ENCODE measurements at regions of chr12 and their contacts with region 1.

Region 1: GRCh38 chr12:28253161-28253641 is 62.9 kb downstream of the CCDC91 start:
- DNase-seq: peak; percentile 60
- H3K4me3 Mint-ChIP-seq: peak overlapping the region; percentile 30
- H3K27ac Mint-ChIP-seq: peak overlapping the region; percentile 79
- H3K4me1 Mint-ChIP-seq: peaks cover 63% of the 10 kb centered on the region
- H3K27me3 Mint-ChIP-seq: no peaks in the 10 kb centered on the region

Region 2: GRCh38 chr12:27802511-27802910 is 450.7 kb before region 1 on chr12:
- CTCF ChIA-PET with region 1: no interaction called
- intact Hi-C with region 1: loop called (anchors 1 kb)
- DNase-seq: peak; percentile 49
- H3K4me3 Mint-ChIP-seq: no peak overlapping the region
- H3K27ac Mint-ChIP-seq: peak overlapping the region; percentile 85
- H3K4me1 Mint-ChIP-seq: peaks cover 59% of the 10 kb centered on the region
- H3K27me3 Mint-ChIP-seq: peaks cover 4% of the 10 kb centered on the region

Region 3: DNA sequence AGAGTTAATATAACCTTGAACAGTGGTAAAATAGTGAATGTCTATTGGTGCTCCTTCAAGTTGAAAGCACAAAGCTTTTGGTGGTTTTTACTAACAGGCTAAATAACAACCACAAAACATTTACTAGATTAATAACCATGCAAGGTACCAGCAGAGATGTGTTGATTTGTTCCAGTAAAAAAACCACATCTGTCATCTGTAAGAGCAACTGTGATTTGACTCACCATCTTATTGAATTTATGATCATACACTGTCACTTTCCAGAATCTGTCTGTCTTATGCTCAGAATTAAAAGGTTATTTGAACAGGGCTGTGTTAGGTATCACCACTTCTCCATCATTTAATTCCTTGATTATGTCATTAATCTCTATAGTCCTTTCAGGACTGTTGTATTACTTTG is 173.7 kb before region 1 on chr12:
- CTCF ChIA-PET with region 1: no interaction called
- intact Hi-C with region 1: loop called (anchors 2 kb)
- DNase-seq: no peak
- H3K4me3 Mint-ChIP-seq: no peak overlapping the region
- H3K27ac Mint-ChIP-seq: no peak overlapping the region
- H3K4me1 Mint-ChIP-seq: peaks cover 8% of the 10 kb centered on the region
- H3K27me3 Mint-ChIP-seq: peaks cover 8% of the 10 kb centered on the region

Region 4: DNA sequence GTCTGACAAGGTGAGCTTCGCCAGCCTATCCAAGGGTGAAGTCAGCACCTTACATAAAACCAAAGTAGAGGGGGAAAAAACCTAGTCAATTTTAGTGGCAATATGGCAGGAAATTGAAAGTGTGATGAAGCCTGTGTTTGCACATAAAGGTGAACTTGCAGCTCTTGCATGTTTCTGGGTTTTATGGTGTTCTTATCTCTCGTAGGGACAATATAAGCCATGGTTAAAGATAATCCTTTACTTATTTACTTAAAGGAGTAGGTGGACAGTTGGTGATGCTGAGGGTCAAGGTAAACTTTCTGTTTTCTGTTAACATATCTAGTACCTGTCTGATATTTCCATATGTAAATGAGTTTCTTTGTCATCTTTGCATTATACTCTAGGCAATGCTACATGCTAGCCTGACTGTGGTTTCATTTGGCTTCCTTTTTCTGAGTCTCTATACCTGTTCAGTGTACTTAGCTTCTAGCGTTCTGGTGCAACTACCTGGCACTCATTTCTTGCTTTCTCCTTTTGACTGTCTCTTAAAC is 30.1 kb before region 1 on chr12:
- CTCF ChIA-PET with region 1: interaction called, 6 read pairs
- intact Hi-C with region 1: loop called (anchors 1 kb)
- DNase-seq: peak; percentile 52
- H3K4me3 Mint-ChIP-seq: peak overlapping the region; percentile 48
- H3K27ac Mint-ChIP-seq: peak overlapping the region; percentile 87
- H3K4me1 Mint-ChIP-seq: peaks cover 56% of the 10 kb centered on the region
- H3K27me3 Mint-ChIP-seq: no peaks in the 10 kb centered on the region

Region 5: DNA sequence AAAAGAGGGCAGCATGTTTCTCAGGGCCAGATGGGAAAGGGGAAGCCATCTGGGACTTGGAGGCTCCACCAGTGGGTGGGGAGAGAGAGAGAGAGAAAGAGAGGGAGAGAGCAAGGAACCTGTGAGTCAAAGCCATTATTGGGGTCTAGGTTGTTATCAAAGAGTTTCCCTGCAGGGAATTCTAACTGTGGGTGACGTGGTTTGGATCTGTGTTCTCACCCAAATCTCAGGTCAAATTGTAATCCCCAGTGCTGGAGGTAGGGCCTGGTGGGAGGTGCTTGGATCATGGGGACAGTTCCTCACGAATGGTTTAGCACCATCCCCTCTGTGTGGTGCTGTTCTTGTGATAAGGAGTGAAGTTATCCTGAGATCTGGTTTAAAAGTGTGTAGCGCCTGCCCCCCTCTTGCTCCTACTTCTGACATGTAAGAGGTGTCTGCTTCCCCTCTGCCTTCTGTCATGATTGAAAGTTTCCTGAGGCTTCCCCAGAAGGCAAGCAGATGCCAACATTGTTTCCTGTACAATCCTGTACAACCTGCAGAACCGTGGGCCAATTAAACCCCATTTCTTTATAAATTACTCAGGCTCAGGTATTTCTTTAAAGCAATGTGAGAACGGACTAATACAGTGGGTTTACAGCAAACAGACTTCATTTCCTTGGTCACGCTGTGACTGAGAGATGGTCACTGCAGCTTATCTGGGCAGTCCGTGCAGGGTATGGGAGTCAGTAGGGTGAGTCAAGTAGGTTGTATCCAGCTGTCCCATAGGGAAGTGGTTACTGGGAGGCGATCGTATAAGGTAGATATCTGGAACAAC is 10.5 kb before region 1 on chr12:
- CTCF ChIA-PET with region 1: no interaction called
- intact Hi-C with region 1: no loop called
- DNase-seq: no peak
- H3K4me3 Mint-ChIP-seq: no peak overlapping the region
- H3K27ac Mint-ChIP-seq: no peak overlapping the region
- H3K4me1 Mint-ChIP-seq: peaks cover 25% of the 10 kb centered on the region
- H3K27me3 Mint-ChIP-seq: no peaks in the 10 kb centered on the region

Region 6: DNA sequence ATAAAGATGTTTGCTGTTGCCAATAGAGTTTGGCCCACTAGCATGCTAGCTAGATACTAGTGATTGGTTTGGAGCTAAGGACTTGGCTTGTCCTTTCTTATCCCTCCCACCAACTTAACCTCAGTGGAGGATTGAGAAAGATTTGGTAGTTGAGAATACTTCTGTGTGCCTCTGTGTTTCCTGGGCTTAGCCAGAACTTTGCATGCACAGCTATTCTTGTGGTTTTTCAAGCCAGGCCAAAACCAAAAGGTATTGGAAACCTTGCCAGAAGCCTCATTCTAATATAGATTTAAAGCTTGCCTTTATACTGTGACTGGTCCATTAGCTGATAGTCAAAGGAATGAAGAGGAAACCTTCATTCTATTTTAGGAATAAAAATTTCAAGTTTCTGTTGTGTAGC is 125.5 kb after region 1 on chr12:
- CTCF ChIA-PET with region 1: no interaction called
- intact Hi-C with region 1: no loop called
- DNase-seq: no peak
- H3K4me3 Mint-ChIP-seq: no peak overlapping the region
- H3K27ac Mint-ChIP-seq: no peak overlapping the region
- H3K4me1 Mint-ChIP-seq: no peaks in the 10 kb centered on the region
- H3K27me3 Mint-ChIP-seq: no peaks in the 10 kb centered on the region

Region 7: DNA sequence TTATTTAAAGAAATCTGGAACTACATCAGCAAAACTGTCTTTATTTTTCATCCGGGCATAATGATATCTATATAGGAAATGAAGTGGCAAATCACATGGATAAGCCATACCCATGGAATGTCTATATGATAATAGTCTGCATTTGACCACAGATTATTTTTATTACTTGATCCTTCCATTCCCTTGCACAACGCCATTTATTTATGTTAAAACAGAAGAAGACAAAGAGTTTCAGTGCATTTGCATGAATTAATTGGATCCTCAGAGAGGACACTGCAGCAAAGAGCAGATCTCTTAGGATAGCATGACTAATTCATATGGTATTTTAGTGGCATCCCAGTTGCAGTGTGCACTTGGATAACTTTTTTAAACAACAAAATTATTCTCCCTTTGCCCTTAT is 282.0 kb after region 1 on chr12:
- CTCF ChIA-PET with region 1: no interaction called
- intact Hi-C with region 1: loop called (anchors 1 kb)
- DNase-seq: no peak
- H3K4me3 Mint-ChIP-seq: no peak overlapping the region
- H3K27ac Mint-ChIP-seq: no peak overlapping the region
- H3K4me1 Mint-ChIP-seq: peaks cover 5% of the 10 kb centered on the region
- H3K27me3 Mint-ChIP-seq: no peaks in the 10 kb centered on the region